Adrenal gland (tissue), 19 donors: ENCODE measurements at regions of chr17 and their contacts with region 1.

Region 1: GRCh38 chr17:67376737-67377487 is at the start of gene PITPNC1:
- DNase-seq: peak; percentile 88 to 92 (median 91)
- H3K4me3 ChIP-seq: peak within 1 kb of the TSS; percentile 60 to 95 (median 77)
- H3K27ac ChIP-seq: peak within 1 kb of the TSS; percentile 51 to 98 (median 90)
- H3K4me1 ChIP-seq: peaks cover 0 to 19% of the 10 kb centered on the region in 2 donors
- H3K27me3 ChIP-seq: no peaks in the 10 kb centered on the region
- CTCF ChIP-seq: peak in 5 of 6 experiments; percentile 8 to 26 (median 18)
- POLR2A ChIP-seq: peak; percentile 68 to 97
- total RNA-seq, gene PITPNC1: 4.9 to 33.0 (median 14.8) TPM

Region 2: GRCh38 chr17:67475236-67475937 is 98.5 kb after region 1 on chr17:
- intact Hi-C with region 1: loop called in 1 of 2 experiments (anchors 5 kb)
- DNase-seq: peak; percentile 74 to 94 (median 86)
- H3K4me3 ChIP-seq: no peak overlapping the region
- H3K27ac ChIP-seq: peak overlapping the region in 2 of 5 donors; percentile 33 to 72
- H3K4me1 ChIP-seq: peaks cover 0 to 13% of the 10 kb centered on the region in 2 donors
- H3K27me3 ChIP-seq: no peaks in the 10 kb centered on the region
- CTCF ChIP-seq: peak; percentile 80 to 96 (median 92)
- POLR2A ChIP-seq: no peak

Region 3: GRCh38 chr17:67629971-67630320 is 253.0 kb after region 1 on chr17:
- intact Hi-C with region 1: loop called (anchors 5 to 10 kb)
- DNase-seq: peak in 2 of 7 donors; percentile 37 to 38
- H3K4me3 ChIP-seq: no peak overlapping the region
- H3K27ac ChIP-seq: peak overlapping the region in 2 of 5 donors; percentile 15 to 27
- H3K4me1 ChIP-seq: peaks cover 0 to 8% of the 10 kb centered on the region in 2 donors
- H3K27me3 ChIP-seq: no peaks in the 10 kb centered on the region
- CTCF ChIP-seq: peak; percentile 22 to 61 (median 50)
- POLR2A ChIP-seq: no peak

Region 4: GRCh38 chr17:67689534-67690177 is 312.7 kb after region 1 on chr17:
- intact Hi-C with region 1: loop called (anchors 5 kb)
- DNase-seq: peak; percentile 38 to 74 (median 54)
- H3K4me3 ChIP-seq: no peak overlapping the region
- H3K27ac ChIP-seq: no peak overlapping the region
- H3K4me1 ChIP-seq: no peaks in the 10 kb centered on the region
- H3K27me3 ChIP-seq: no peaks in the 10 kb centered on the region
- CTCF ChIP-seq: peak; percentile 71 to 86 (median 81)
- POLR2A ChIP-seq: no peak